WTC11 (cell line): ENCODE measurements at regions of chr19 and their contacts with region 1.

Region 1: DNA sequence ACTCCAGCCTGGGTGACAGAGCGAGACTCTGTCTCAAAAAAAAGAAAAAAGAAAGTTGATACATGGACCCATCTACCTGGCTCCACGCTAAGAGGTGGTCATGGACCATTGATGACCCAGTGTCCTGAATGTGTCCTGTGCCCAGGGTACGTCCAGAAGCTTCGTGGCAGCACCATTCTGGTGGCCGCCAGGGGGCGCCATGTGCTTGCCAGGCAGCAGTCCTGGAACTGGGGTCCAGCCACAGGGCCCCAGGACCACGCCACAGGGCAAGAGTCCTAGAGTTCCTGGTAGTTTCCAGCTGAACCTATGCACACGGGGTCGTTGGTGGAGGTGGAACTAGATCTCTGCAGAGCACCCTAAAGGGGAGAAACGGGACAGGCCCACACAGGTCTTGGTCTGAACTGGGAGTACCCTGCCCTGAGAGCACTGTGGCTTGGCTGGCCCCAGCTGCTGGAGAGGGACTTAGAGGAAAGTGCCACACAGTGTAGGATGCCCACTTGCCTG is 19.9 kb upstream of the FBXO27 start:
- DNase-seq: peak; percentile 83
- ATAC-seq: peak; percentile 98
- H3K4me3 Mint-ChIP-seq: no peak overlapping the region
- H3K27ac Mint-ChIP-seq: no peak overlapping the region
- H3K4me1 Mint-ChIP-seq: no peaks in the 10 kb centered on the region
- H3K27me3 Mint-ChIP-seq: peaks cover 12% of the 10 kb centered on the region
- CTCF ChIP-seq: peak; percentile 96

Region 2: DNA sequence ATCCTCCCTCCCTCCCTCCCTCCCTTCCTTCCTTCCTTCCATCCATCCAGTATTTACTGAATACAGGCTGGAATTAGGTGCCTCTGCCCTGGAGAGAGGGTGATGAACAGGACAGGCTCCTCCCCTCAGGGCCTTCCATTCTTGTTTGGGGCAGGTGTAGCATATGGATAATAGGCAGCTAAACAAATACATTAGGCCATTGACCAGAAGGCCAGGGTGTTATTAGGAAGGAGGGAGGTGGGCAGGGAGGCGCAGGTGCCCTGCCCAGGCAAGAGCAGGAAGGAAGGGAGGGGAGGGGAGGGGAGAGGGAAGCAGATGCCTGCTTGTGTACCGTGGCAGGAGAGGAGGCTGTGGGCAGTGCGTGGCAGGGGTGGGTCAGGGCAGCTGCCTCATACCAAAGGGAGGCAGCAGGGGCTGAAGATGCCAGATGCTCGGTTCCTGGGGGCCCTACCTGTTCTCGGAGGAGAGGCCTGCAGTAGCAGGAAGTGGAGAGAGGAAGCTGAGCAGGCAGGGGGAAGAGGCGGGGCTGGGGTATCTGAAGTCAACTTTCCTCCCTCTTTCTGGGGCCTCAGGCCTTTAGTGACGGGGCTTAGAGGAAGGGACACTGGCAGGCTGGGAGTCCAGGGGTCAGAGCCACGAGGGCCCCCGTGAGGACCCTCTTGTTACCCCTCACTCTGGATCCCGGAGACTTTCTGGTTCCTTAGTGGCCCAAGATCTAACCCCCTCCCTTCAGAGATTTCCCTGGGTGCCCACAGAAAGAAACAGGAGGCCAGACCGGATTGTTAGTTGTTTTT is 174.3 kb before region 1 on chr19 and contains the start of gene RINL:
- CTCF ChIA-PET with region 1: no interaction called
- POLR2A ChIA-PET with region 1: no interaction called
- DNase-seq: no peak
- ATAC-seq: peak; percentile 45
- H3K4me3 Mint-ChIP-seq: peak within 1 kb of the TSS; percentile 39; the same call in 1 of the 2 replicates
- H3K27ac Mint-ChIP-seq: peak within 1 kb of the TSS; percentile 83; the same call in 1 of the 2 replicates
- H3K4me1 Mint-ChIP-seq: peaks cover 26% of the 10 kb centered on the region
- H3K27me3 Mint-ChIP-seq: no peaks in the 10 kb centered on the region; the same call in 1 of the 2 replicates
- CTCF ChIP-seq: no peak
- total RNA-seq, gene RINL: 12.6 to 14.6 TPM (median 14.5 TPM) in 3 replicates

Region 3: DNA sequence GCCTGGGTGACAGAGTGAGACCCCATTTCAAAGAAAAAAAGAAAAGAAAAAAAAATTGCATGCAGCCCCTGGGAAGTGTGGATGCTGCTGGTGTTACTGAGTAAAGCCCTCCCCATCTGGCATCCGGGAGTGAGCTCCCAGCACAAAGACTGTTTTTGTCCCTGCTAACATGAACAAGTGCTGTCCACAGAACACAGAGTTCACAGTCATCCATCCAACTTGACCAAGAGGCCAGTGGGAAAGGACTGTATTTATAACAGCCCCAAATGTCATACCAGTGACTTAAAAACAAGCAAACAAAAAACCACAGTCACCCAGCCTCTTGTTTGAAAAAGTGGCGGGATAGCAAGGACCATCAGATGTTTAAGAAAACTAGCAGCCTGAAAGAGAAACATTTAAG is 87.6 kb before region 1 on chr19:
- CTCF ChIA-PET with region 1: interaction called, 11 read pairs
- POLR2A ChIA-PET with region 1: no interaction called
- DNase-seq: no peak
- ATAC-seq: no peak
- H3K4me3 Mint-ChIP-seq: no peak overlapping the region
- H3K27ac Mint-ChIP-seq: no peak overlapping the region; the same call in 1 of the 2 replicates
- H3K4me1 Mint-ChIP-seq: peaks cover 9% of the 10 kb centered on the region
- H3K27me3 Mint-ChIP-seq: no peaks in the 10 kb centered on the region
- CTCF ChIP-seq: no peak

Region 4: DNA sequence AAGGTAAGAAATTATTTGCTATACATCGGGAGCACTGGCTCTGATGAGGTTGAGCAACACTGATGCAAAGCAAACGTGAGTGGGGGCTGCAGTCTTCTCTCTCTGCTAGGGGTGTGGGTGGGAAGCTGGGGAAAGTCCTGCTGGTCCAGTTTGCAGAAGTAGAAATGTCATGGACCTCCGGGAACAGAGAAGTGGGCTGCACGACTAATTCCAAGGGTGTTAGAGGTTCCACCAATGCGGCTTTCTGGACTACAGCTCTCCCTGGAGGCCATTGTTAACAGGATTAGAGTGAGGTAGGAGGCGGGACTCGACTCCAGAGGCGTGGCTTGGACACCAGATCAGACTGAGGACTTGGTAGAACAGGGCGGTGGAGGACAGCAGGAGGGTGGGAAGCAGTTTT is 14.2 kb before region 1 on chr19:
- CTCF ChIA-PET with region 1: interaction called, 28 read pairs
- POLR2A ChIA-PET with region 1: interaction called, 3 read pairs
- DNase-seq: peak; percentile 69
- ATAC-seq: peak; percentile 100
- H3K4me3 Mint-ChIP-seq: no peak overlapping the region
- H3K27ac Mint-ChIP-seq: no peak overlapping the region
- H3K4me1 Mint-ChIP-seq: peaks cover 7% of the 10 kb centered on the region; the same call in 1 of the 2 replicates
- H3K27me3 Mint-ChIP-seq: peaks cover 23% of the 10 kb centered on the region
- CTCF ChIP-seq: no peak

Region 5: DNA sequence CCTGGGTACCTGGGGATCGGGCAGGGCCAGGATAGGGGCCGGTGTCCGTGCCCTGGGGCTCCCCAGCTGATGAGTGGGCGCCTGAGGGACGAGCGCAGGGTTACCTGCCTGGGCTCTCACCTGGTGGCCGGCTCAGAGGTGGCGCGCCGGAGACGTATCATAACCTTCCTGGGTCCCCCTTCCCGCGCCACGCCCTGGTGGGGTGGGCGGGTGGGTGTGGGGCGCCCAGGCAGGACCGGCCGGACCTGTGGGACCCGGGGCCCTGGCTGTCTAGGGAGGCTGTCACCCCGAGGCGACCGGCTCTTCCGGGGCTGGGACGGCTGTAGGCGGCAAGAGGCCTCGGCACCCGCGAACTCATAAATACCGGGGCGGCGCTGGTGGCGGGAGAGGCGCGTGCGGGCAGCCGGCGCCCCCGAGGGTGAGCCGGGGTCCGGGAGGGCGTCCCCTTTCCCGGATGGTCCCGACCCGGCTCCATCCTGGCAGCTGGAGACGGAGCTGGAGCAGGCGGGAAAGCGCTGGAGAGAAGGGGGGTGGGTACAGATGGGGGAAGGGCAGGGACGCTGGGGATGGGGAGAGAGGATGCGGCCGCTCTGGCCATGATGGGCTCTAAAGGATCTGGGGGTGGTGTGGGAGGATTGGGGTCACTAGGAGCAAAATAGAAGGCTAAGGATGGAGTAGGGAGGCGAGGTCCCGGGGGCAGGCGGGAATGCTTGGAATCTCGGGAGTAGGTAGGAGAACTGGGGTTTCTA is 31.9 kb after region 1 on chr19 and contains the start of gene ACP7:
- CTCF ChIA-PET with region 1: interaction called, 11 read pairs
- POLR2A ChIA-PET with region 1: no interaction called
- DNase-seq: peak; percentile 40
- ATAC-seq: peak; percentile 70
- H3K4me3 Mint-ChIP-seq: peak within 1 kb of the TSS; percentile 74
- H3K27ac Mint-ChIP-seq: no peak within 1 kb of the TSS
- H3K4me1 Mint-ChIP-seq: peaks cover 19% of the 10 kb centered on the region
- H3K27me3 Mint-ChIP-seq: peaks cover 55% of the 10 kb centered on the region
- CTCF ChIP-seq: no peak
- total RNA-seq, gene ACP7: 0.09 to 0.11 TPM (median 0.11 TPM) in 3 replicates

Region 6: GRCh38 chr19:39098365-39099269 is 46.3 kb after region 1 on chr19:
- CTCF ChIA-PET with region 1: interaction called, 16 read pairs
- POLR2A ChIA-PET with region 1: no interaction called
- DNase-seq: peak; percentile 33
- ATAC-seq: peak; percentile 70
- H3K4me3 Mint-ChIP-seq: peak overlapping the region; percentile 66
- H3K27ac Mint-ChIP-seq: no peak overlapping the region
- H3K4me1 Mint-ChIP-seq: no peaks in the 10 kb centered on the region
- H3K27me3 Mint-ChIP-seq: peaks cover 55% of the 10 kb centered on the region
- CTCF ChIP-seq: no peak